Activated naive CD8-positive, alpha-beta T cell treated with anti-CD3 and anti-CD28 coated beads, Interleukin-2, amount 10 ng/mL, durations not matched to agents 7 days and 5 days (primary cell): ENCODE measurements at regions of chr6 and their contacts with region 1.

Region 1: DNA sequence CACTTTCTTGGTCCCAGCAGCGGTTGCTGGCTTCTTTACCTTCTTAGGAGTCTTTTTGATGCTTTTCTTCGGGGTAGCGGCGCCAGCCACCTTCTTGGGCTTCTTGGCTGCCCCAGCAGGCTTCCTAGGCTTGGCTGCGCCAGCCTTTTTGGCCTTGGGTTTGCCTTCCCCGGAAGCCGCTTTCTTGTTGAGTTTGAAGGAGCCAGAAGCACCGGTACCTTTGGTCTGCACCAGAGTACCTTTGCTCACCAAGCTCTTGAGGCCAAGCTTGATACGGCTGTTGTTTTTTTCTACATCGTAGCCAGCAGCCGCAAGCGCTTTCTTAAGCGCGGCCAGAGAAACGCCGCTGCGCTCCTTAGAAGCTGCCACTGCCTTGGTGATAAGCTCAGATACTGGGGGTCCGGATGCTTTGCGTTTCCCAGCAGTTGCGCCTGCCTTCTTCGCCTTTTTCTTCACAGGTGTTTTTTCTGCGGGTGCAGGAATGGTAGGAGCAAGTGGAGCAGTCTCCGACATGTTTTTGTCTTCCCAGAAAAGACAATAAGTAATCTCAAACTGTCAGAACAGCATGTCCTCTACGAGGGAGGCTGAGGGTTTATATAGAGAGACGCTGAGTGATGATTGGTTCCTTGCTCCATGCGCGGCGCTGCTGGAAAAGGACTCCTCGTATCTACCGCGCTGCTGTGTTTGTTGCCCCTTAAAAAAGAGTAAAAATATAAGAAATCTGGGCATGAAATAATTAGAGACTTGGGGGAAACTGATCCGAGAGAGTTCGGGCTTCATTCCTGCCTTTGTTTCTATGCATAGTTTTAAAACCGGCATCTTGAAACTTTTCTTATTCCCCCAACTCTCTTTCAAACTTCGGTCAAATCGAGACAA is 130.3 kb upstream of the BTN3A2 start:
- DNase-seq: peak; percentile 76
- ATAC-seq: peak; percentile 59
- H3K4me3 Mint-ChIP-seq: peak overlapping the region; percentile 94
- H3K27ac Mint-ChIP-seq: peak overlapping the region; percentile 100
- H3K4me1 Mint-ChIP-seq: peaks cover 36% of the 10 kb centered on the region
- H3K27me3 Mint-ChIP-seq: no peaks in the 10 kb centered on the region

Region 2: GRCh38 chr6:26025894-26026832 is 208.5 kb before region 1 on chr6:
- POLR2A ChIA-PET with region 1: interaction called, 119 read pairs
- DNase-seq: peak; percentile 86
- ATAC-seq: peak; percentile 35
- H3K4me3 Mint-ChIP-seq: peak overlapping the region; percentile 89
- H3K27ac Mint-ChIP-seq: peak overlapping the region; percentile 99
- H3K4me1 Mint-ChIP-seq: peaks cover 75% of the 10 kb centered on the region
- H3K27me3 Mint-ChIP-seq: no peaks in the 10 kb centered on the region

Region 3: DNA sequence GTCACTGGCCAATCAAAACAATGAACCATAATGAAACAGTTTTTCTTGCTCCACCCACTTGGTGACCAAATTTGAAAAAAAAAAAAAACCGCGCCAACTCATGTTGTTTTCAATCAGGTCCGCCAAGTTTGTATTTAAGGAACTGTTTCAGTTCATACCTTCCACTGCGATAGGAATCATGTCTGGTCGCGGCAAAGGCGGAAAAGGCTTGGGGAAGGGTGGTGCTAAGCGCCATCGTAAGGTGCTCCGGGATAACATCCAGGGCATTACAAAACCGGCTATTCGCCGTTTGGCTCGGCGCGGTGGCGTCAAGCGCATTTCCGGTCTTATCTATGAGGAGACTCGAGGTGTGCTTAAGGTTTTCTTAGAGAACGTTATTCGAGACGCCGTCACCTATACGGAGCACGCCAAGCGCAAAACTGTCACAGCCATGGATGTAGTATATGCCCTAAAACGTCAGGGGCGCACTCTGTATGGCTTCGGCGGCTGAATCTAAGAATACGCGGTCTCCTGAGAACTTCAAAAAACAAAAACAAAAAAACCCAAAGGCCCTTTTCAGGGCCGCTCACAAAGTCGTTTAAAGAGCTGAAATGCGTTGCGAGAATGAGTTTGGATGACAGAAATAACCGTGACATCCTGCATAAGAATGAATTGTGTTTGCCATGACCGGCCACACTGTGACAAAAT is 130.7 kb before region 1 on chr6:
- POLR2A ChIA-PET with region 1: interaction called, 21 read pairs
- DNase-seq: peak; percentile 86
- ATAC-seq: peak; percentile 89
- H3K4me3 Mint-ChIP-seq: peak overlapping the region; percentile 93
- H3K27ac Mint-ChIP-seq: peak overlapping the region; percentile 100
- H3K4me1 Mint-ChIP-seq: peaks cover 18% of the 10 kb centered on the region
- H3K27me3 Mint-ChIP-seq: no peaks in the 10 kb centered on the region

Region 4: DNA sequence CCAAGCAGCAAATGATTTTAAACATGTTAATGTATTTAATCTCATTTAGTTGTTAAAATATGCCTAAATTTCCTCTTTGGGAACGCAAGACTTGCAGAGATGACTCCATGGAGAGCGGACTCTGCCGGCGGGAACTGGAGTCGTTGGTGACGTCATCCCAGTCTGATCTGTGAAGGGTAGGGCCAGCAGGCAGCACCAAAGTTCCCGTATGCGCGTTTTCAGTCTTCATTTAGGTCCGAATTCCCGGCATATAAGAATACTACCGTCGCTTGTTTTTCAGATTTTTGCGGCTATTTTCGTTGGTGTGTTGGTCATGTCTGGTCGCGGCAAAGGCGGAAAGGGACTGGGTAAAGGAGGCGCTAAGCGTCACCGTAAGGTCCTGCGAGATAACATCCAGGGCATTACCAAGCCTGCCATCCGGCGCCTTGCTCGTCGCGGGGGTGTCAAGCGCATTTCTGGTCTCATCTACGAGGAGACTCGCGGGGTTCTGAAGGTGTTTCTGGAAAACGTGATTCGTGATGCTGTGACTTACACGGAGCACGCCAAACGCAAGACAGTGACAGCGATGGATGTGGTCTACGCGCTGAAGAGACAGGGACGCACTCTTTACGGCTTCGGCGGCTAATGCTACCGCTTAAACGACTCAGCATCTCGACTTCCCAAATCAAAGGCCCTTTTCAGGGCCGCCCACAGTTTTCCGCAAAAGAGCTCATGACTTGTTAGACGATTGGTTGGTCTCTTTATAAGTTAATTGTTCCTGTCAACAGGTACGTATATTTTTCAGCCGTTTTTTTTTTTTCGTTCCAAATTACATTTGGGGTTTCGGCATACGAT is 30.1 kb before region 1 on chr6:
- POLR2A ChIA-PET with region 1: interaction called, 494 read pairs
- DNase-seq: peak; percentile 84
- ATAC-seq: peak; percentile 64
- H3K4me3 Mint-ChIP-seq: no peak overlapping the region
- H3K27ac Mint-ChIP-seq: no peak overlapping the region
- H3K4me1 Mint-ChIP-seq: peaks cover 34% of the 10 kb centered on the region
- H3K27me3 Mint-ChIP-seq: no peaks in the 10 kb centered on the region

Region 5: DNA sequence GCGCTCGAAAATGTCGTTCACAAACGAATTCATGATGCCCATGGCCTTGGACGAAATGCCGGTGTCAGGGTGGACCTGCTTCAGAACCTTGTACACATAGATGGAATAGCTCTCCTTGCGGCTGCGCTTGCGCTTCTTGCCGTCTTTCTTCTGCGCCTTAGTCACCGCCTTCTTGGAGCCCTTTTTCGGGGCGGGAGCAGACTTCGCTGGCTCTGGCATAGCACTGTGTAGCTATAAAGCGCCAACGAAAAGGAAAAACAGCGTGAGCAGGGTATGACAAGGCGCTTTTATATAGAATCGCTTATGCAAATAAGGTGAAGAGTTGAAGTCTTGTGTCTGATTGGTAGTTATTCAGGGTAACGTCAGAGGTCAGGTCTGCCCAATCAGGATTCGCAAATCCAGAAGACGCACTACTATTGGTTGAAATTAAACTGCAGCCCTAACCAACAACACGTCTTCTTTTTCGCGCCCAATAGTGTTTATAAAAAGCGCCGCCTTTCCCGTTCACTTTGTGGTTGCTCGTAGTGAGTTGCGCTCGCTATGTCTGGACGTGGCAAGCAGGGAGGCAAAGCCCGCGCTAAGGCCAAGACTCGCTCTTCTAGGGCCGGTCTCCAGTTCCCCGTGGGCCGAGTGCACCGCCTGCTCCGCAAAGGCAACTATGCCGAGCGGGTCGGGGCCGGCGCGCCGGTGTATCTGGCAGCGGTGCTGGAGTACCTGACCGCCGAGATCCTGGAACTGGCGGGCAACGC is 898.0 kb after region 1 on chr6:
- POLR2A ChIA-PET with region 1: interaction called, 57 read pairs
- DNase-seq: peak; percentile 90
- ATAC-seq: peak; percentile 76
- H3K4me3 Mint-ChIP-seq: no peak overlapping the region
- H3K27ac Mint-ChIP-seq: no peak overlapping the region
- H3K4me1 Mint-ChIP-seq: peaks cover 46% of the 10 kb centered on the region
- H3K27me3 Mint-ChIP-seq: no peaks in the 10 kb centered on the region

Region 6: DNA sequence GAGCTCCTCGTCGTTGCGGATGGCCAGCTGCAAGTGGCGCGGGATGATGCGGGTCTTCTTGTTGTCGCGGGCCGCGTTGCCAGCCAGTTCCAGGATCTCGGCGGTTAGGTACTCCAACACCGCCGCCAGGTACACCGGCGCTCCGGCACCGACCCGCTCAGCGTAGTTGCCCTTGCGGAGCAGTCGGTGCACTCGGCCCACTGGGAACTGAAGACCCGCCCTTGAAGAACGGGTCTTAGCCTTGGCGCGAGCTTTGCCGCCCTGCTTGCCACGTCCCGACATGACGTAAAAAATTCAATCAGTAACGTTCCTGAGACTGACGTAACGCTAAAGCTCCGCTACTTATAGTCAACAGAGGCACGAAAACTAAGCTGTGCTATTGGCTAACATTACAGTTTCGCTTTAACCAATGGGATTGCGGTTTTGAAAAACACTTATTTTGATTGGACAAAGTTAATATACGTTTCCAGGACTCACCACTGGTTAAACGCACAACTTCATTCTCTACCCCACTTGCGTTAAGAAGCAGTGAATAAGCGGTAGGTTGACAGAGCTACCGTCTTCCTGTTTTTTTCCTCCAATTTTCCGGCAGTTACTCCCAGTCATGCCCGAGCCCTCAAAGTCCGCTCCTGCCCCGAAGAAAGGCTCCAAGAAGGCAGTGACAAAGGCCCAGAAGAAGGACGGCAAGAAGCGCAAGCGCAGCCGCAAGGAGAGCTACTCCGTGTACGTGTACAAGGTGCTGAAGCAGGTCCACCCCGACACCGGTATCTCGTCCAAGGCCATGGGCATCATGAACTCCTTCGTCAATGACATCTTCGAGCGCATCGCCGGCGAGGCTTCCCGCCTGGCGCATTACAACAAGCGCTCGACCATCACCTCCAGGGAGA is 1603.6 kb after region 1 on chr6:
- POLR2A ChIA-PET with region 1: interaction called, 15 read pairs
- DNase-seq: peak; percentile 84
- ATAC-seq: peak; percentile 74
- H3K4me3 Mint-ChIP-seq: no peak overlapping the region
- H3K27ac Mint-ChIP-seq: no peak overlapping the region
- H3K4me1 Mint-ChIP-seq: peaks cover 26% of the 10 kb centered on the region
- H3K27me3 Mint-ChIP-seq: peaks cover 2% of the 10 kb centered on the region